Activated CD4-positive, alpha-beta memory T cell treated with anti-CD3 and anti-CD28 coated beads for 36 hours (primary cell): ENCODE measurements at regions of chr2 and their contacts with region 1.

Region 1: DNA sequence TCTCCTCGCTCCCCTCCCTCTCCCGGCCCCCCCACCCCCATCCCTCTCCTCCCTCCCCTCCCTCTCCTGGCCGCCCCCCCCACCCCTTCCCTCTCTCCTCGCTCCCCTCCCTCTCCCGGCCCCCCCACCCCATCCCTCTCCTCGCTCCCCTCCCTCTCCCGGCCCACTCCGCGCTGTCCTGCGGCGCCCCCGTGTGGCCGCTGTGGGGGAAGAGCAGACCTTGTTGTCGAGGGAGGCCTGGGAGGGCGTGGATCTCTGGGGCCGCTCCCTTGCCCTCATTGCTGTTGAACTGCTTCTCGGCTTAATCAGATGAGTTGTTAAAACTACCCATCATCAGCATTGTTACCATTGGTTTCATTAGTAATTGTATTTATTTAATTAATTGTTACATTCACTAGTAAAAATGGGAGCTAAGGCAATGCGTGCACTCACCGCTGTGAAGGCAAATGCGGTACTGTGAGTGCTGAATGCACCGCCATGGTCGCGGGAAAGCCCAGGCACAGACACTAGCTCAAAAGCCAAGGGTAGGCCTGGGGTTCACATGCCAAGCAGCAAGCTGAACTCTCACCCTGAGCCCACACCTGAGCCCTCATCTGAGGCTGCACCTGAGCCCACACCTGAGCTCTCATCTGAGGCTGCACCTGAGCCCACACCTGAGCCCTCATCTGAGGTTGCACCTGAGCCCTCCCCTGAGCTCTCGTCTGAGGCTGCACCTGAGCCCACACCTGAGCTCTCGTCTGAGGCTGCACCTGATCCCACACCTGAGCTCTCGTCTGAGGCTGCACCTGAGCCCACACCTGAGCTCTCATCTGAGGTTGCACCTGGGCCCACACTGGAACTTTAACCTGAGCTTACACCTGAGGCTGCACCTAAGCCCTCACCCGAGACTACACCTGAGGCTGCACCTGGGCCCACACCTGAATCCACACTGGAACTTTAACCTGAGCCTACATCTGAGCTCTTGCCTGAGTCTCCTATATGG is 8.8 kb downstream of the RTP5 start:
- DNase-seq: peak; percentile 82
- H3K4me3 Mint-ChIP-seq: no peak overlapping the region
- H3K27ac Mint-ChIP-seq: no peak overlapping the region
- H3K4me1 Mint-ChIP-seq: peaks cover 28% of the 10 kb centered on the region
- H3K27me3 Mint-ChIP-seq: no peaks in the 10 kb centered on the region

Region 2: DNA sequence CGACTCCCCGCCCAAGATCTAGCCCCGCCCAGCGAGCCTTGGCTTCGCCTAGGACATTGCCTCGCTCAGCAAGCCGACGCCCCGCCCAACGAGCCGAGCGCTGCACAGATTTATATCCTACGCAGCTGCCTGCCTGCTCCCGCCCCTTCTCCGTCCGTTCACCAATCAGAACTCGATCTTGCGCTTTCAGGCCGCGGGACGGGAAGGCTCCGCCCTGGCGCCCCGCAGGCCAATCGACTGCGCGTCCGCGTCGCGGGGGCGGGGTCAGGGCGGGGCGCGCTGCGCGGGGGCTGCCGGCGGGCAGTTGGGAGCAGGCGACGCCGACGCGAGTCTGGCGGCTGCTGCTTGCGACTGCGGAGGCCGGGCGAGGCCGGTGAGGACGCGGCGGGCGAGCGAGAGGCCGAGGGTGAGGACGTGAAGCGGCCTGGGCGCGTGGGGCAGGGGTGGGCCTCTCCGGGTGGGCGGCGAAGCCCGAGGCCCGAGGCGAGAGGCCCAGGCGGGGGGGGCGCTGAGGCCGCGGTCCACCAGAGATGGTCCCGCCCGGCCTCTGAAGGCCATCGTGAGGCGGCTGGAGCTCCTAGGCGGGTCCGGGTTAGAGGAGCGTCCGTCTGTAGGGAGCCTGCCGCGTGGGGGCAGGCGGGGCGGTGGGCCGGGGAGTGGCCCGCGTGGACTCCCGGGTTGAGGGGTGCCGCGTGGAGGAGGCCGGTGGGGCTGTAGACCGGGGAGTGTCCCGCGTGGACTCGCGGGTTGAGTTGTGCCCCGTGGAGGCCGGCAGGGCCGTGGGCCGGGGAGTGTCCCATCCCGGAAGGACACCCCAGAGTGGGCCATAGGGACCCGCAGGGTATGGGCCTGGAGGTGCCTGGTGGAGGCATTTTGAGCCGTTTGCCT is 522.1 kb before region 1 on chr2 and contains the start of gene FARP2:
- CTCF ChIA-PET with region 1: no interaction called
- POLR2A ChIA-PET with region 1: no interaction called
- intact Hi-C with region 1: loop called (anchors 2 kb)
- DNase-seq: peak; percentile 98
- H3K4me3 Mint-ChIP-seq: peak within 1 kb of the TSS; percentile 75
- H3K27ac Mint-ChIP-seq: peak within 1 kb of the TSS; percentile 79
- H3K4me1 Mint-ChIP-seq: peaks cover 35% of the 10 kb centered on the region
- H3K27me3 Mint-ChIP-seq: no peaks in the 10 kb centered on the region
- total RNA-seq, gene FARP2: 25.1 to 29.5 TPM

Region 3: GRCh38 chr2:241702132-241703031 is 175.9 kb before region 1 on chr2:
- CTCF ChIA-PET with region 1: interaction called, 39 read pairs
- POLR2A ChIA-PET with region 1: interaction called, 15 read pairs
- intact Hi-C with region 1: loop called (anchors 1 kb)
- DNase-seq: peak; percentile 90
- H3K4me3 Mint-ChIP-seq: peak overlapping the region; percentile 84
- H3K27ac Mint-ChIP-seq: peak overlapping the region; percentile 63
- H3K4me1 Mint-ChIP-seq: peaks cover 25% of the 10 kb centered on the region
- H3K27me3 Mint-ChIP-seq: no peaks in the 10 kb centered on the region

Region 4: GRCh38 chr2:241741016-241741415 is 137.3 kb before region 1 on chr2:
- CTCF ChIA-PET with region 1: interaction called, 13 read pairs
- POLR2A ChIA-PET with region 1: no interaction called
- intact Hi-C with region 1: no loop called
- DNase-seq: peak; percentile 72
- H3K4me3 Mint-ChIP-seq: no peak overlapping the region
- H3K27ac Mint-ChIP-seq: peak overlapping the region; percentile 56
- H3K4me1 Mint-ChIP-seq: peaks cover 36% of the 10 kb centered on the region
- H3K27me3 Mint-ChIP-seq: no peaks in the 10 kb centered on the region

Region 5: DNA sequence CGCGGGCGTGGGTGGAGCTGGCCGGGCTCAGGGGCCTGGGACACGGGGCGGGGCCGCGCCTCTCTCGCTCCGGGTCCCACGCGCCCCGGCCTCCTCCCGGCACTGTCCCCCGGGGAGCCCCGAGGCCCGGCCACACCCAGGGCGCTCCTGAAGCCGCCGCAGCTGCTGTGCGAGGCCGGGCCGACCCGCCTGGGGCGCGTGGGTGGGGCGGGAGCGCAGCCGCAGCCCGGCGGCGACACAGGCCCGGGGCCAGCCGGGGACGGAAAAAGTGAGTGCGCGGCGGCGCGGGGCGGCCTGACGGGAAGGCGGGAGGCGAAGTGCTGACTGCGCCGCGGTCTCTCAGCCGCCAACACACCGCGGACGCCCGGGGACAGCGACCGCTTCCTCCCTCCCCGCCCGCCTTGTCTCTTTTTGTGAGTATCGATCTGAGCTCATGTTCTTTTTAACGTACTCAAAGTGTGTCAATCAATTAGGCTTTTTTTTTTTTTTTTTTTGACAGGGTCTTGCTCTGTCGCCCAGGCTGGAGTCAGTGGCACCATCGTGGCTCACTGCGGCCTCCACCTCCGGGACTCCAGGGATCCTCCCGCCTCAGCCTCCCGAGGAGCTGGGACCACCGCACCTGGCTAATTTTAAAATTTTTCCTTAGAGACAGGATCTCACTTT is 34.1 kb before region 1 on chr2:
- CTCF ChIA-PET with region 1: interaction called, 4 read pairs
- POLR2A ChIA-PET with region 1: no interaction called
- intact Hi-C with region 1: loop called (anchors 1 kb)
- DNase-seq: peak; percentile 94
- H3K4me3 Mint-ChIP-seq: peak overlapping the region; percentile 72
- H3K27ac Mint-ChIP-seq: peak overlapping the region; percentile 82
- H3K4me1 Mint-ChIP-seq: peaks cover 39% of the 10 kb centered on the region
- H3K27me3 Mint-ChIP-seq: peaks cover 5% of the 10 kb centered on the region

Region 6: DNA sequence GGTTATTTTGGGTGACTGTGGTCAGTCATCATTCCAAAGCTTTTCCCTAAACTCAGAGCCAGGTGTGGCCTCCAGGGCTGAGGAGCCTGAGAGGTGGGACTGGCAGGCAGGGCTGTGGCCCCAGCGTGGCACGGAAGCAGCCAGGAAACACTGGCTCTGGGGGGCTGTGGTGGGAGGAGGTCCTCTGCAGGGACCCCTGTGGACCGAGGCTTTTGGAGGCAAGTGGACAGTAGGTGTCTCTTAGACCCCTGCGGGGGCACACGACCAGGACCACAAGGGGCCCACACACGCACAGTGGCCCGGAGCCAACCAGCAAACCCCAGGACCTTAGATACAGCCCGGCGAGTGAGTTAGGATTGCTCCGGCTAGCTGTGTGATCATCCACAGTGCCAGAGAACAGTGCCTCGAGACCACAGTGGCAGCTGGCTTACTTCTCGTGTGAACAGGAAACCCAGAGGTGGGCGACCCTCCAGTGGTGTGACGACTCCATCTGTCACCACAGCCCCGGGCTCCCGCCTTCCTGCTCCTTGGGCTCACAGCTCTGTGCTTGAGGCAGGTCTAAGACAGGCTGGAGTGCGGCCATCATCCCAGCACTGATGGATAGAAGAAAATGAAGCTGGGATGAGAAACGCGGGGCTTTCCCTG is 10.4 kb before region 1 on chr2:
- CTCF ChIA-PET with region 1: interaction called, 36 read pairs
- POLR2A ChIA-PET with region 1: no interaction called
- intact Hi-C with region 1: no loop called
- DNase-seq: peak; percentile 74
- H3K4me3 Mint-ChIP-seq: no peak overlapping the region
- H3K27ac Mint-ChIP-seq: no peak overlapping the region
- H3K4me1 Mint-ChIP-seq: peaks cover 62% of the 10 kb centered on the region
- H3K27me3 Mint-ChIP-seq: peaks cover 4% of the 10 kb centered on the region